ENCODE measurements at regions of chr1 and their contacts with region 1.

Region 1: DNA sequence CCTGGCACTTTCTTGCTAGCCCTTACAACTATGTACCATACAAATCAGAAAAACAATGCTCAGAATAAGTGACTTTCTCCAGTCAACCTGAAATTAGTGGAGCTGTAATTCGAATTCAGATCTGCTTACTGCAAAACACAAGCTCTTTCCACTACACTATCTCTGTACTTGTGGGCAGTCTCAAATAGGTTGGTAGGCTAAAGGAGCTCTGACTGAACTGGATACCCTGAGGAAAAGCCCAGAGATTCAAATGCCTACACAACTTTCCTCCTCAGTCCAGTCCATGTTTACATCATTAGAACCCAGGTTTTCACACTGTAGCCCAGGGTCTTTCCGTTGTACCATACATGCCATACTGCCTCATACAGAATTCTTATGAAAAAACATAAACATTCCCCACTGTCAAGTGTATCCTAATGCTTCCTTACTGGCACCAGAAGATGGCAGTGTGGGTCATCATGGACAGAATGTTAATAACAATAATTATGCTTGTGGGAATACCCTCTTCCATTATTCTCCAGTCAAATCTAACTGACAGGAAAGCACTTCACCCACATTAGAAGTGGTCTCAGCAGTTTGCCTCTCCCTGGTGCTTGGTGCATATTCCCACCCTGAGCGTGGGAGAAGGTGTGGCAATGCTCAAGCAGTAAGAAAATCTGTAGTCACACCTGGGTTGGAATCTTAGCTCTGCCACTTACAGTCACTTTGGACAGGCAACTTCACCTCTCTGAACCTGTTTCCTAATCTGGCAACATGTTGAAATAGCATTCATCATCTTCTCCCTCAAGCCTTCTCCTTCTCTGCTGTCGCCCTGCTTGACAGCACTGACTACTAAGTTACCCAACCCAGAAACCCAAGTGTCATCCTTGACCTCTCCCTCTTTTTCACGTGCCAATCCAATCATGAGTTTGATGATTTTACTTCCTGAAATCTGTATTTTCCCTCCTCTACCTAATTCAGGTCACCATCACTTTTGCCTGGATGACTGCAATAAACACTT is 14.4 kb upstream of the ZFYVE9 start:
- DNase-seq: peak; percentile 28 to 64 (median 52)
- H3K4me3 ChIP-seq: no peak overlapping the region
- H3K27ac ChIP-seq: no peak overlapping the region
- H3K4me1 ChIP-seq: no peaks in the 10 kb centered on the region
- H3K27me3 ChIP-seq: no peaks in the 10 kb centered on the region
- CTCF ChIP-seq: peak; percentile 40 to 76 (median 70)
- POLR2A ChIP-seq: no peak

Region 2: GRCh38 chr1:52296345-52296744 is 168.9 kb after region 1 on chr1:
- intact Hi-C with region 1: loop called in 1 of 2 experiments (anchors 5 kb)
- DNase-seq: peak in 3 of 7 donors; percentile 21 to 26 (median 22)
- H3K4me3 ChIP-seq: no peak overlapping the region
- H3K27ac ChIP-seq: no peak overlapping the region
- H3K4me1 ChIP-seq: no peaks in the 10 kb centered on the region
- H3K27me3 ChIP-seq: no peaks in the 10 kb centered on the region
- CTCF ChIP-seq: peak; percentile 55 to 83 (median 74)
- POLR2A ChIP-seq: no peak

Region 3: GRCh38 chr1:52659356-52659755 is 531.9 kb after region 1 on chr1:
- intact Hi-C with region 1: loop called in 1 of 2 experiments (anchors 10 kb)
- DNase-seq: no peak
- H3K4me3 ChIP-seq: no peak overlapping the region
- H3K27ac ChIP-seq: no peak overlapping the region
- H3K4me1 ChIP-seq: no peaks in the 10 kb centered on the region
- H3K27me3 ChIP-seq: no peaks in the 10 kb centered on the region
- CTCF ChIP-seq: no peak
- POLR2A ChIP-seq: no peak

Measured in adrenal gland (tissue), 19 donors.